GM10248 (cell line): ENCODE measurements at regions of chr5 and their contacts with region 1.

Region 1: DNA sequence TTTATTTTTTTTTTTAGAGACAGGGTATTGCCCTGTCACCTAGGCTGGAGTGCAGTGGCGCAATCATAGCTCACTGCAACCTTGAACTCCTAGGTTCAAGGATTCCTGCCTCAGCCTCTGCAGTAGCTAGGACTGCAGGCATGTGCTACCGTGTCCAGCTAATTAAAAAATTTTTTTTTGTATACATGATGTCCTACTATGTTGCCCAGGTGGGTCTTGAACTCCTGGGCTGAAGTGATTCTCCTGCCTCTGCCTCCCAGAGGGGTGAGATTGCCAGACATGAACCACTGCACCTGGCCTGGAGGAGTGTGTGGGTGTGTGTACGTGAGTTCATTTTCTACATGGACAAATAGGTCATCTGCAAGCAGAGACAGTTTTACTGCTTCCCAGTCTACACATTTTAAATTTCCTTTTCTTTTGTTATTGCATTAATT is 33.8 kb downstream of the JMY start:
- DNase-seq: no peak
- CTCF ChIP-seq: no peak

Region 2: DNA sequence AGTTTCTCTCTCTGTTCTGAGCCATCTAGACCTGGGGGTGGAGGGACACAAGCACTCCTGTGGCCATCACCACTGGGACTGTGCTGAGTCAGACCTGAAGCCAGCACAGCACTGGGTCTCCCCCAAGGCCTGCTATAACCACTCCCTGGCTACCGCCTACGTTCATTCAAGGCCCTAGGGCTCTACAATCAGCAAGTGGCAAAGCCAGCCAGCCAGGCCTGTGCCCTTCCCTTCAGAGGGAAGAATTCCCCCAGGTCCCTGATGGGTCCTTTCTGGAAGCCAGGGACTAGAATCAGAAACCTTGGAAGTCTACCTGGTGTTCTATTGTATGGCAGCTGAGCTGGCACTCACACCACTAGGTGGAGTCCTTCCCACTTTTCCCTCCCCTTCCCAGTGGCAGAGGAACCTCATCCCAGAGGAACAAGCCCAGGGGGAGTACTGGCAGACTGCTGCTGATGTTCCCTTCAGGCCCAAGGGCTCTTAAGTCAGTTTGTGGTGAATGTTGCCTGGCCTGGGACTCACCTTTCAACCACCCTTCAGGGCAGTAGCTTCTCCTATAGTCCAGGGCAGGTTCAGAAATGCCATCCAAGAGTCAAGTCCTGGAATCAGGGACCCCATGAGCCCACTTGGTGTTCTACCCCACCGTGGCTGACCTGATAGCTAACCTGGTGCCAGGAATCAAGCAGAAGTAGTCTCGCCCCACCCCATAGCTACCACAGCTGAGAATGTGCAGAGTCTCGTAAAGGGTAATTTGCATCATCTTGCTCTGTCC is 13.8 kb before region 1 on chr5:
- CTCF ChIA-PET with region 1: interaction called, 19 read pairs
- POLR2A ChIA-PET with region 1: no interaction called
- DNase-seq: no peak
- CTCF ChIP-seq: peak; percentile 50